ENCODE measurements at regions of chrX and their contacts with region 1.

Region 1: DNA sequence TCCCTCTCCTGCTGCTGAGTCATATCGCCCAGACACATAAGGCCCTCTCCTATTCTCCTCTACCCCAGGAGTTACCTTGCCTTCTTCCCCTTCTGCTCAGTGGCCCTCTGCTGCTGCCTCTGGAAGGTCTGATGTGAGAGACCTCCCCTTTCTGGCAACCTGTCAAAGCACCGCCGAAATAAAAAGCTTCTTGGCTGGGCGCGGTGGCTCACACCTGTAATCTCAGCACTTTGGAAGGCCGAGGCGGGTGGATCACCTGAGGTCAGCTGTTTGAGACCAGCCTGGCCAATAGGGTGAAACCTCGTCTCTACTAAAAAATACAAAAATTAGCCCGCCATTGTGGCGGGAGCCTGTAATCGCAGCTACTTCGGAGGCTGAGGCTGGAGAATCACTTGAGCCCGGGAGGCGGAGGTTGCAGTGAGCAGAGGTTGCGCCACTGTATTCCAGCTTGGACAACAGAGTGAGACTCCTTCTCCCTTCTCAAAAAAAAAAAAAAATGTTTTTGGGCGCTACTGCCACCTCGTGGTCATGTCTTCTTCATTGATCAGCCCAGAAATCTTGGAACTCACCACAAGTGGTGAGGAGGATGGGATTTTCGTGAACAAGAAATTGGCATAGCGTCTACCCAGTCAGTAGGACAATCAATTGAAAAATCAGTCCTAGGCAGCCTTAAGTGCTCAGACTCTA is 8.6 kb upstream of the ZXDA start:
- DNase-seq: peak in 4 of 5 donors; percentile 24 to 43 (median 30)
- H3K4me3 ChIP-seq: no peak overlapping the region
- H3K4me3 Mint-ChIP-seq: peak overlapping the region in 1 of 8 donors; percentile 18
- H3K27ac ChIP-seq: no peak overlapping the region
- H3K27ac Mint-ChIP-seq: no peak overlapping the region
- H3K4me1 ChIP-seq: peaks cover 4% of the 10 kb centered on the region
- H3K4me1 Mint-ChIP-seq: no peaks in the 10 kb centered on the region
- H3K27me3 ChIP-seq: no peaks in the 10 kb centered on the region
- H3K27me3 Mint-ChIP-seq: no peaks in the 10 kb centered on the region

Region 2: GRCh38 chrX:56813318-56813837 is 1105.5 kb before region 1 on chrX:
- CTCF ChIA-PET with region 1: no interaction called
- POLR2A ChIA-PET with region 1: no interaction called
- intact Hi-C with region 1: loop called (anchors 5 kb)
- DNase-seq: peak; percentile 70 to 86 (median 76)
- H3K4me3 ChIP-seq: no peak overlapping the region
- H3K4me3 Mint-ChIP-seq: peak overlapping the region; percentile 73 to 92 (median 85)
- H3K27ac ChIP-seq: peak overlapping the region; percentile 75
- H3K27ac Mint-ChIP-seq: peak overlapping the region; percentile 90 to 97 (median 95)
- H3K4me1 ChIP-seq: peaks cover 33% of the 10 kb centered on the region
- H3K4me1 Mint-ChIP-seq: peaks cover 27 to 53% (median 37%) of the 10 kb centered on the region in 4 donors
- H3K27me3 ChIP-seq: no peaks in the 10 kb centered on the region
- H3K27me3 Mint-ChIP-seq: no peaks in the 10 kb centered on the region

Region 3: DNA sequence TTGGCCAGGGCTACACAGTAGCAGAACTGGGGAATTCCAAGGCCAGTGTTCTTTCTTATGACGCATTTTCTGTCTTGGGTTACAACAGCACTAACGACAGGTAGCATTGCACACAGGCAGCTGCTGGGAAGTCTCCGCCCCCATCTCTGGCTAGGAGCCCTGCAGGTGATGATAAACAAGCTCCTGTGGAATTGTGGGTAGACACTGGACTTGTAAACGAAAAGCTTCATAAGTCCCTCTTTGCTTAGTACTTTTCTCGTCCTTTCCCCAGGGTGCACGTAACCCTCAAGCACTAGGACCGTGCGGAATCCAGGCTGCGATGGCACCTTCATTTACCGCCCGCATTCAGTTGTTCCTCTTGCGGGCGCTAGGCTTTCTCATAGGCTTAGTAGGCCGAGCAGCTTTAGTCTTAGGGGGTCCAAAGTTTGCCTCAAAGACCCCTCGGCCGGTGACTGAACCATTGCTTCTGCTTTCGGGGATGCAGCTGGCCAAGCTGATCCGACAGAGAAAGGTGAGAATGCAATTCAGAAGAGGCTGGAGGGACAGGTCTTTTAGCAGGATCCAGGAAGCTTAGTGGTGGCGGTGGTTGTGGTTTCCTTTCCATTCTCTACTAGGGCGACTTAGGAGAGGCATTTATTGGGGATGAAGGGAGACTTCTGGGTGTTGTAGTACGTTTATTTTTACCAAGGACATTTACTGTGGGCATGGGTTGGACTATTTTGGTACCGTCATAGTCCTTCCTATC is 632.2 kb before region 1 on chrX and contains the start of gene FAAH2:
- CTCF ChIA-PET with region 1: no interaction called
- POLR2A ChIA-PET with region 1: no interaction called
- intact Hi-C with region 1: loop called (anchors 5 kb)
- DNase-seq: peak; percentile 63 to 94 (median 81)
- H3K4me3 ChIP-seq: peak within 1 kb of the TSS; percentile 55 to 79
- H3K4me3 Mint-ChIP-seq: peak within 1 kb of the TSS; percentile 87 to 97 (median 92)
- H3K27ac ChIP-seq: peak within 1 kb of the TSS; percentile 82
- H3K27ac Mint-ChIP-seq: peak within 1 kb of the TSS; percentile 86 to 98 (median 95)
- H3K4me1 ChIP-seq: peaks cover 48% of the 10 kb centered on the region
- H3K4me1 Mint-ChIP-seq: peaks cover 19 to 52% (median 30%) of the 10 kb centered on the region in 4 donors
- H3K27me3 ChIP-seq: no peaks in the 10 kb centered on the region
- H3K27me3 Mint-ChIP-seq: peaks cover 0 to 1% of the 10 kb centered on the region in 2 donors
- total RNA-seq, gene FAAH2: 17.6 to 25.6 TPM

Region 4: GRCh38 chrX:57595381-57595811 is 323.5 kb before region 1 on chrX:
- CTCF ChIA-PET with region 1: no interaction called
- POLR2A ChIA-PET with region 1: no interaction called
- intact Hi-C with region 1: loop called (anchors 5 kb)
- DNase-seq: peak in 4 of 5 donors; percentile 15 to 30 (median 21)
- H3K4me3 ChIP-seq: peak overlapping the region in 1 of 2 donors; percentile 28
- H3K4me3 Mint-ChIP-seq: peak overlapping the region; percentile 23 to 85 (median 67)
- H3K27ac ChIP-seq: no peak overlapping the region
- H3K27ac Mint-ChIP-seq: peak overlapping the region in 4 of 7 donors; percentile 9 to 80 (median 26)
- H3K4me1 ChIP-seq: peaks cover 43% of the 10 kb centered on the region
- H3K4me1 Mint-ChIP-seq: peaks cover 29 to 61% (median 43%) of the 10 kb centered on the region in 4 donors
- H3K27me3 ChIP-seq: no peaks in the 10 kb centered on the region
- H3K27me3 Mint-ChIP-seq: no peaks in the 10 kb centered on the region

Region 5: GRCh38 chrX:57821703-57822375 is 97.1 kb before region 1 on chrX:
- CTCF ChIA-PET with region 1: interaction called, 5 read pairs
- POLR2A ChIA-PET with region 1: no interaction called
- intact Hi-C with region 1: loop called (anchors 1 kb)
- DNase-seq: peak; percentile 37 to 56 (median 51)
- H3K4me3 ChIP-seq: no peak overlapping the region
- H3K4me3 Mint-ChIP-seq: peak overlapping the region in 3 of 8 donors; percentile 6 to 63 (median 47)
- H3K27ac ChIP-seq: no peak overlapping the region
- H3K27ac Mint-ChIP-seq: no peak overlapping the region
- H3K4me1 ChIP-seq: peaks cover 2% of the 10 kb centered on the region
- H3K4me1 Mint-ChIP-seq: peaks cover 1 to 5% (median 3%) of the 10 kb centered on the region in 4 donors
- H3K27me3 ChIP-seq: no peaks in the 10 kb centered on the region
- H3K27me3 Mint-ChIP-seq: peaks cover 0 to 1% of the 10 kb centered on the region in 2 donors

Measured in CD4-positive, alpha-beta memory T cell (primary cell).